ENCODE measurements at regions of chr2 and their contacts with region 1.

Region 1: GRCh38 chr2:71510196-71510807 is 56.9 kb downstream of the DYSF start:
- DNase-seq: no peak
- H3K4me3 ChIP-seq: no peak overlapping the region
- CTCF ChIP-seq: peak; percentile 90

Region 2: GRCh38 chr2:71282495-71282894 is 227.8 kb before region 1 on chr2:
- CTCF ChIA-PET with region 1: interaction called, 11 read pairs
- POLR2A ChIA-PET with region 1: no interaction called
- DNase-seq: no peak
- H3K4me3 ChIP-seq: no peak overlapping the region
- CTCF ChIP-seq: no peak

Region 3: DNA sequence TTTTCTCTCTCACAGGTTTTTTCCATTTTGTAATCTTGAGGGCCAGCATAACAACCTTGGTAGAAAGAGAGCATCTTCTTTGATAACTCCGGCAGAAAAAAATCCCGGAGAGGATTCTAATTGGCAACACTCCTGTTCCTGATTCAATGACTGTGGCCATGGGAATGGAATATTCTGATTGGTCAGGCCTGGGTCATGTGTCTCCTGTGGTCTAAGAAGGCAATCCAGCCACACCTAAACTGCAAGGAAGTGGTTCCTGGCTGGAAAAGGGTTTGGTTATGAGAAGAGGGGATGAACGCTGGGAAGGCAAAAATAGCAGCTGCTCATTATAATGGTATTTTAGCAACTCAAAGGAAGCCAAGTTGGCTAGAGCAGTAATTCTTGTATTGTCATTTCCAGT is 203.5 kb before region 1 on chr2:
- CTCF ChIA-PET with region 1: interaction called, 26 read pairs
- POLR2A ChIA-PET with region 1: no interaction called
- DNase-seq: no peak
- H3K4me3 ChIP-seq: no peak overlapping the region
- CTCF ChIP-seq: no peak

Region 4: GRCh38 chr2:71452565-71452964 is 57.7 kb before region 1 on chr2:
- CTCF ChIA-PET with region 1: interaction called, 456 read pairs
- POLR2A ChIA-PET with region 1: no interaction called
- DNase-seq: no peak
- H3K4me3 ChIP-seq: no peak overlapping the region
- CTCF ChIP-seq: no peak

Region 5: GRCh38 chr2:71530641-71531332 is 20.5 kb after region 1 on chr2:
- CTCF ChIA-PET with region 1: interaction called, 18 read pairs
- POLR2A ChIA-PET with region 1: no interaction called
- DNase-seq: no peak
- H3K4me3 ChIP-seq: no peak overlapping the region
- CTCF ChIP-seq: peak; percentile 45

Region 6: DNA sequence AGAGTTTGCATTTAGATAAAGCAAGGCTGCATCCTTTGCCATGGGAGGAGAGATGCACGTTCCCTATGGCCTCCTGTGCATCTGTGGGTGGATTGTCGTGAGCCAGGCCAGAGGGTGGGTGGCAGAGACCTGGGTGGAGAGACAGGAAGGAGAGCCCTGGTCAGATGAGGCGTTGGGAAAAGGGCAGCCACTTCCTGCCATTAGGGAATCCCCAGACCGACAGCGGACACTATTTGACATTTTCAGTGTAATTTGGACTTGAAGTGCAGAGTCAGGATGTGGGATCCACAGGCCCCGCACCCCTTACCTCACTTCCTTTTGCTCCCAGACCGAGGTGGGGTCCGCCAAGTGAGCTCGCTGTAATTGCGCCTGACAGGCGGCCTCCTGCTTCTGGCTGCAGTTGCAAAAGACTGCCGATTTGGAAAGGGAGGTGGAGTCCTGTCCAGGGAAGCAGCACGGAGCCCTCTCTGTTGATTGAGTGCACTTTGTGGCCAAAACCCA is 93.1 kb after region 1 on chr2:
- CTCF ChIA-PET with region 1: no interaction called
- POLR2A ChIA-PET with region 1: no interaction called
- DNase-seq: no peak
- H3K4me3 ChIP-seq: no peak overlapping the region
- CTCF ChIP-seq: no peak